Activated T-helper 1 cell treated with anti-CD3 and anti-CD28 coated beads, Interleukin-12 subunit alpha, Interleukin-12 subunit beta, Interleukin-2, Interleukin-4 antibody, amounts not matched to agents 30 ng/mL and 10 ng/mL and 1 ng/mL, durations not matched to agents 14 hours and 24 hours and 36 hours (primary cell): ENCODE measurements at regions of chr2 and their contacts with region 1.

Region 1: GRCh38 chr2:68282811-68283418 is 30.6 kb upstream of the PPP3R1 start:
- DNase-seq: no peak
- H3K4me3 Mint-ChIP-seq: no peak overlapping the region
- H3K27ac Mint-ChIP-seq: no peak overlapping the region
- H3K4me1 Mint-ChIP-seq: no peaks in the 10 kb centered on the region
- H3K27me3 Mint-ChIP-seq: peaks cover 45% of the 10 kb centered on the region

Region 2: GRCh38 chr2:68196120-68196716 is 86.7 kb before region 1 on chr2:
- intact Hi-C with region 1: loop called (anchors 1 kb)
- DNase-seq: no peak
- H3K4me3 Mint-ChIP-seq: no peak overlapping the region
- H3K27ac Mint-ChIP-seq: no peak overlapping the region
- H3K4me1 Mint-ChIP-seq: peaks cover 45% of the 10 kb centered on the region
- H3K27me3 Mint-ChIP-seq: no peaks in the 10 kb centered on the region

Region 3: DNA sequence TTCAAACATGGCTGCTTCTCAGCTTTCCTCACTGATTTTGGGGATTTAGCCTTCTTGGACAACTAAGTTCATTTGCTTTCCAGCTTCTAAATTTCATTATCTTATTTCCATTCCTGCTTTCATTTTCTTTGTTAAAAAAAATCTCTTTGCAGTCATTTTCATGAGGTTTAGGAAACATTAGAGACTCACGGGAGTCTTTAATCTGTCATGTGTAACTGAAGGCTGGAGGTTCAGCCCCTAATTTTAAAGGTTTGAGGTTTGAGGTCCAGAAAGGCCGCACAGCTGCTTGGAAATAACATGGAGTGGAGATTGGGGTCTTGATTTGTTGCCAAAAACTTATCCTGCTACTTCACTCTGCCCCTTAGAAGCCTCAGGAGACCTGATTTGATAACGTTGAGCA is 390.7 kb after region 1 on chr2:
- intact Hi-C with region 1: no loop called
- DNase-seq: no peak
- H3K4me3 Mint-ChIP-seq: no peak overlapping the region
- H3K27ac Mint-ChIP-seq: no peak overlapping the region
- H3K4me1 Mint-ChIP-seq: no peaks in the 10 kb centered on the region
- H3K27me3 Mint-ChIP-seq: peaks cover 9% of the 10 kb centered on the region